PC-9 (cell line): ENCODE measurements at regions of chr12 and their contacts with region 1.

Region 1: DNA sequence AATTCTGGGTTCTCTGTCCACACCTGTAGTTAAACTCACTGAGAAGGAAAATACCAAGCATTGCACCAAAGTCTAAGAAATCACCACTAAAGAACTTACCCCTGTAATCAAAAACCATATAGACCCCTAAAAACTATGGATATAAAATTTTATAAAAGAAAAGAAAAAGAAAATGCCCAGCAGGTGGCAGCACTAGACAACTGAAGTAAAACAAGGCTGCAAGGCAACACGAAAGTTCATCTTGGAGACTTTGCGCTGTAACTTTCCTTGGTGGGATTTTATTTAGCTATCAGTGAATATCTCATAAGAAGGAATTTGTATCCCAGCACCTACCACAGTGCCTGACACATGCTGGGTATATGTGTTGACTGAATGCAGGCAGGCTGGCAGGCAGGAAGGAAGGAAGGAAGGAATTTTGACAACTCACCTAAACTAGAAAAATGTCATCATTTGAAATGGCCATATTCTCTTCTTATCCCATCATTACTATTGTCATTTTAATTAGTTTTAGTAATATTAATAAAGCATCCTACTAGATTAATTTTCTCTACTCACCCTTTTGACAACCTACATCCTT is 68.2 kb upstream of the ETV6 start:
- DNase-seq: peak; percentile 56 to 82
- H3K4me3 ChIP-seq: no peak overlapping the region
- H3K27ac ChIP-seq: peak overlapping the region; percentile 94
- H3K4me1 ChIP-seq: peaks cover 49% of the 10 kb centered on the region
- H3K27me3 ChIP-seq: no peaks in the 10 kb centered on the region
- CTCF ChIP-seq: peak; percentile 84

Region 2: DNA sequence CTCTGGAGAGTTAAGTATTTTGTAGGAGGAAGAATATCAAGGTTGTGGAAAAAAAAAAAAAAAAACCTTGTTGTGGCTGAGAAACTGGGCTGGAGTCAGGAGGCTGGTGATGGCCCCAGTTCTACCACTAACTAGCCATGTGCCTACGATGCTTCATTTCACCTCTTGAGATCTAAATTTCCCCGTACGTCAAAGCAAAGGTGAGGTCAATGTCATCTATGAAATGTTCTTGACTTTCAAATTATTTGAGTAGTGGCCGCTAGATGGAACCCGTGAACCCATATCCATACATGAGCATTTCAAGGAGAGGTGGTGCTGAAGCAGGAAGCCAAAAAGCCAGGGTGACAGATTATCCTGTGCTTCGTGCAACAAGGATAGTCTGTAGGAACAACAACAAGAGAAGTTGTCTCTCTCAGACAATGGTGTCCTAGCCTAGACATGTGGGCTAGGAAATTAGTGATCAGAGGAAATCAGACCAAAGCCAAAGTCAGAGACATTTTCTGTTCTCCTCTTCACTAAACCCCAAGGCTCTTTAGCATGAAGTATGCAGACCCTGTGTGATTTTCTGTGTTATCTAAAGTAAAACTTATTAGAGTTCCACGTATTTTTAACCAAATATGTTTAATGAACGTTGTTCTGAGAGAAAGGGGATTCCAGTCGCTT is 27.3 kb before region 1 on chr12:
- CTCF ChIA-PET with region 1: interaction called, 12 read pairs
- POLR2A ChIA-PET with region 1: interaction called, 5 read pairs
- intact Hi-C with region 1: loop called (anchors 1 kb)
- DNase-seq: peak; percentile 54 to 61
- H3K4me3 ChIP-seq: no peak overlapping the region
- H3K27ac ChIP-seq: no peak overlapping the region
- H3K4me1 ChIP-seq: peaks cover 21% of the 10 kb centered on the region; the same call in 1 of the 2 replicates
- H3K27me3 ChIP-seq: no peaks in the 10 kb centered on the region
- CTCF ChIP-seq: peak; percentile 79

Region 3: GRCh38 chr12:11730299-11731041 is 149.2 kb after region 1 on chr12:
- CTCF ChIA-PET with region 1: no interaction called
- POLR2A ChIA-PET with region 1: interaction called, 4 read pairs
- intact Hi-C with region 1: loop called (anchors 2 kb)
- DNase-seq: peak; percentile 83 to 96
- H3K4me3 ChIP-seq: peak overlapping the region; percentile 8; the same call in 1 of the 2 replicates
- H3K27ac ChIP-seq: peak overlapping the region; percentile 87
- H3K4me1 ChIP-seq: peaks cover 44% of the 10 kb centered on the region
- H3K27me3 ChIP-seq: no peaks in the 10 kb centered on the region
- CTCF ChIP-seq: no peak

Region 4: GRCh38 chr12:11877869-11878780 is 296.9 kb after region 1 on chr12:
- CTCF ChIA-PET with region 1: interaction called, 18 read pairs
- POLR2A ChIA-PET with region 1: no interaction called
- intact Hi-C with region 1: loop called (anchors 1 kb)
- DNase-seq: peak; percentile 85 to 93
- H3K4me3 ChIP-seq: peak overlapping the region; percentile 45; the same call in 1 of the 2 replicates
- H3K27ac ChIP-seq: peak overlapping the region; percentile 96
- H3K4me1 ChIP-seq: peaks cover 64% of the 10 kb centered on the region
- H3K27me3 ChIP-seq: no peaks in the 10 kb centered on the region
- CTCF ChIP-seq: no peak

Region 5: DNA sequence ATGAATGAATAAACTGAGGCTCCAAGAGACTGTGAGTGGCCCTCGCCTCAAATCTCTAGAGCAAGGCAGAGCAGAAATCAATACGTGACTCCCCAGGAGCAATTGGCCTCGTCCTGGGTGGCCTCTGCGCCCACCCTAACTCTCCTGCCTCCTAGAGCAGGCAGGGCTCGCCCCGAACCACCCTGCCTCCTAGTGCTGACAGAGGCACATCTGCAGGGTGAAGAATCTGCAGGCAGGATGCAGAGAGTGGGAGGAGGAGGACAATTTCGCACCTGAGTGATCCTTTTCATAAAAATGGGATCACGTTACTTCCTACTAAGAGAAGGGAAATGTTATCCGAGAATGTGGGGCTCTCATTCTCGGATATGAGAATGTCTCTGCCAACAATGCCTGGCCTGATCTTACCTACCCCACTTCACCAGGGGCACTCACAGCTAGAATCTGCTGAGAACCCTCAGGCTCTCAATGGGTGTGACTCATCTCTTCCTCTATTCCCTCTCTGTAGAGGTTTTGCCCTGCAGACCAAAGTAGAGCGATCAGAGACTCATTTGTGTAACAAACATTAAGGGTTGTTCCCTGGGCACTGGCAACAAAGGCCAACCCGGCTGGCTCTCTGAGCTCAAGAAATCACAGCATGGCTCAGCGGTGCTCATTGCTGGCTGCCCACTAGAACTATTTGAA is 427.8 kb after region 1 on chr12:
- CTCF ChIA-PET with region 1: no interaction called
- POLR2A ChIA-PET with region 1: interaction called, 4 read pairs
- intact Hi-C with region 1: loop called (anchors 2 kb)
- DNase-seq: peak; percentile 80 to 98
- H3K4me3 ChIP-seq: no peak overlapping the region
- H3K27ac ChIP-seq: peak overlapping the region; percentile 94
- H3K4me1 ChIP-seq: peaks cover 45% of the 10 kb centered on the region
- H3K27me3 ChIP-seq: no peaks in the 10 kb centered on the region
- CTCF ChIP-seq: no peak; the same call in 1 of the 2 replicates